Left cardiac atrium (tissue), 4 donors: ENCODE measurements at regions of chr1 and their contacts with region 1.

Region 1: DNA sequence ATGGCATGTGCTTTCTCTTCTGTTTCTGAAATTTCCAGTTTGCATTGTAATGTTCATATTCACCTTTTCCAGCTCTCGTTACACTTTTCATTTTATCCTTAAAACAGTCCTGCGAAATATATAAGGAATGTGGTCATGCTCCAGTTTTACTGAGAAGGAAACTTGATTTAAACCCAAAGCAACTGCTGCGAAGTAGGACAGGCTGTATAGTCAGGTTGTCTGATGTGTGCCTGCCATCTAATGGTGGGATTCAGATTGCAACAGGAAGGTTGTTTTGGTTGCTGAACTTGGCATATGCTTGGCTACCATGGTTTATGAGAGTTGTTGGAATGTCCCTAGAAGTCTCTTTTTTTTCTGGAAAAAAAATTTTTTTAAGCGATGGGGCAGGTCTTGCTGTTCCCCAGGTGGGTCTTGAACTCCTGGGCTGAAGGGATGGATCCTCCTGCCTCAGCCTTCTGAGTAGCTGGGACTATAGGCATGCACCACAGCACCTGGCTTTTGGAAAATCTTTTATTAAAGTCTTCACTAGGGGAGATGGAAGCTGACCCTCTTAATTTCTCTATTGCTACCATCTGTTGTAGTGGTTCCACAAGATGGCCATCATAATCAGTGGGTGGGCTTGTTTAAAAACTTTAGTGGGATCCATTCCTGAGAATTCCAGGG is 86.9 kb downstream of the UCK2 start:
- DNase-seq: peak; percentile 38
- ATAC-seq: peak; percentile 79 to 83

Region 2: DNA sequence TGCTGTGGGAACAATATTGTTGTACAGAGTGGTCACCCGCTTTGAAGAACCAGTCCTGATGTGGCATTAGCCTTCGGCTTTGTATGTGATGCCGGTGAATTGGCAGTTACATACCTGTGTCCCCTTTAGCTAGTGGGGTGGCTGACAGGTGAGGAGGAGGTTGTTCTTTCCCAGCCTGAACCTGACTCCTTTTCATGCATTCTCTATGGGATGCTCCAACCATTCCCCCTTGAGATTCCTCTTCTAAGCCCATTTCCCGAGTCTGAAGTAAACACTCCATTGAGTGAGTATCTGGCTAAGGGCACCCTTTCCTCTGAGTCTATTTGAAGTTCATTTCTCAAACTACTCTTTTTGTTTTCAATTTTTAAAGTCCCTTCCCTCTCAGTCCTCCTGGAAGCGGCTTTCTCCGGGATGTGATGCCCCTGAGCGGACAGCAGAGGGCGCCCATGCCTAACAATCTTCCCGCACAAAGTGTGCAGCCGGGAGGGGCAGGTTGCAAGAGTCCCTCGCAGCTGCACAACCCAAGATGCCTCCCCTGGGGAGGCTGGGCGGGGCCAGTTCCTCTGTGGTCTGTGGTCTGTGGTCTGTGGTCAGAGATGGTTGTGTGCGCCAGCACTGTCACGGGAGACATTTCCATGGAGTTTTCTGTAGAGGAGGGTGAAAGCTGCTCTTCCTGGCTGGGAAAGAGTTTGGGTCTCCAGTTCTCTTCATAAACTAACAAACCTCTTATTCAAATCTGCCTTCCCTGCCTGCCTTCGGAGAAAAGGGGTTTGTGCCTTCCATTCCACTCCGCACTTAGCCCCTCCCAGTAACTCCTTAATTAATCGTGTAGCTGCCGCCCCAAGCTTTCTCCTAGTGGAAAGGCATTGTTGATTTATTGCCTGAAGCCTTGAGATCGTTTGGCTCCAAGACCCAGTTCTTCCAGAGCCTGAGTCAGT is 521.4 kb before region 1 on chr1:
- intact Hi-C with region 1: loop called in 1 of 2 experiments (anchors 10 kb)
- DNase-seq: peak; percentile 88
- ATAC-seq: peak; percentile 92 to 97

Region 3: GRCh38 chr1:165403835-165404482 is 510.3 kb before region 1 on chr1:
- intact Hi-C with region 1: loop called (anchors 5 to 10 kb)
- DNase-seq: no peak
- ATAC-seq: peak; percentile 56 to 66

Region 4: DNA sequence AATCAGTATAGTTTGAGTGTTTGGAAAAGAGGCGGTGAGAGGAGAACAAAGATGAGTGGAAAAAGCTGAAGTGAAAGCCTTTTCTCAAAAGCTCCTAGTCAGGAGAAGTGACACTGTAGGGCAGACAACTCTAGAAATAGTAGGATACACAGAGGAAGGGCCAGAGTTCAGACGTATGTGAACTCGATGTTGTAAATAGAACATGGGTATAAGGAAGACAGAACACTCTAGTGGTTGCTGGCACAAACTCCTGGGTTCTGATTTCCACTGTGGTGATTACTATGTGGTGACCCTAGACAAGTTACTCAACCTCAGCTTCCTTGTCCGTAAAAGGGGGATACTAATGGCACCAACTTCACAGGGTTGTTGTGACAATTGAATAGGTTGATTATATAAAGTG is 313.5 kb before region 1 on chr1:
- intact Hi-C with region 1: loop called (anchors 2 to 5 kb)
- DNase-seq: no peak
- ATAC-seq: no peak

Region 5: GRCh38 chr1:165717918-165718515 is 196.2 kb before region 1 on chr1:
- intact Hi-C with region 1: loop called (anchors 2 to 5 kb)
- DNase-seq: no peak
- ATAC-seq: peak; percentile 38 to 52

Region 6: GRCh38 chr1:165988275-165988674 is 74.0 kb after region 1 on chr1:
- intact Hi-C with region 1: no loop called
- DNase-seq: no peak
- ATAC-seq: no peak

Region 7: DNA sequence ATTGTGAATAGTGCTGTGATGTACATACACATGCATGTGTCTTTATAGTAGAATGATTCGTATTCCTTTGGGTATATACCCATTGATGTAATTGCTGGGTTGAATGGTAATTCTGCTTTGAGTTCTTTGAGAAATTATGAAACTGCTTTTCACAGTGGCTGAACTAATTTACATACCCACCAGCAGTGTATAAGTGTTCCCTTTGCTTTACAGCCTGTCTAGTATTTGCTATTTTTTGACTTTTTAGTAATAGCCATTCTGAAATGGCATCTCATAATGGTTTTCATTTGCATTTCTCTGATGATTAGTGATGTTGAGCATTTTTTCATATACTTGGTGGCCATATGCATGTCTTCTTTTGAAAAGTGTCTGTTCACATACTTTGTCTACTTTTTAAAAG is 307.0 kb after region 1 on chr1:
- intact Hi-C with region 1: no loop called
- DNase-seq: no peak
- ATAC-seq: no peak